Heart right ventricle (tissue), 16 donors: ENCODE measurements at regions of chr1 and their contacts with region 1.

Region 1: GRCh38 chr1:192808518-192809306 is at the start of gene RGS2:
- DNase-seq: peak; percentile 89 to 92
- ATAC-seq: peak; percentile 97 to 100 (median 98)
- H3K4me3 ChIP-seq: peak within 1 kb of the TSS; percentile 56 to 94 (median 74)
- H3K27ac ChIP-seq: peak within 1 kb of the TSS; percentile 60 to 94 (median 88)
- H3K4me1 ChIP-seq: peaks cover 0 to 59% (median 23%) of the 10 kb centered on the region in 9 donors
- H3K27me3 ChIP-seq: no peaks in the 10 kb centered on the region
- CTCF ChIP-seq: peak in 5 of 9 donors; percentile 21 to 51 (median 29)
- total RNA-seq, gene RGS2: 12.2 to 30.8 (median 17.4) TPM

Region 2: GRCh38 chr1:192609110-192610079 is 199.3 kb before region 1 on chr1:
- intact Hi-C with region 1: loop called in 4 of 10 experiments (anchors 5 to 10 kb)
- DNase-seq: peak; percentile 9 to 17
- ATAC-seq: peak in 7 of 8 donors; percentile 26 to 89 (median 52)
- H3K4me3 ChIP-seq: no peak overlapping the region
- H3K27ac ChIP-seq: no peak overlapping the region
- H3K4me1 ChIP-seq: peaks cover 0 to 22% (median 0%) of the 10 kb centered on the region in 9 donors
- H3K27me3 ChIP-seq: no peaks in the 10 kb centered on the region
- CTCF ChIP-seq: no peak

Region 3: DNA sequence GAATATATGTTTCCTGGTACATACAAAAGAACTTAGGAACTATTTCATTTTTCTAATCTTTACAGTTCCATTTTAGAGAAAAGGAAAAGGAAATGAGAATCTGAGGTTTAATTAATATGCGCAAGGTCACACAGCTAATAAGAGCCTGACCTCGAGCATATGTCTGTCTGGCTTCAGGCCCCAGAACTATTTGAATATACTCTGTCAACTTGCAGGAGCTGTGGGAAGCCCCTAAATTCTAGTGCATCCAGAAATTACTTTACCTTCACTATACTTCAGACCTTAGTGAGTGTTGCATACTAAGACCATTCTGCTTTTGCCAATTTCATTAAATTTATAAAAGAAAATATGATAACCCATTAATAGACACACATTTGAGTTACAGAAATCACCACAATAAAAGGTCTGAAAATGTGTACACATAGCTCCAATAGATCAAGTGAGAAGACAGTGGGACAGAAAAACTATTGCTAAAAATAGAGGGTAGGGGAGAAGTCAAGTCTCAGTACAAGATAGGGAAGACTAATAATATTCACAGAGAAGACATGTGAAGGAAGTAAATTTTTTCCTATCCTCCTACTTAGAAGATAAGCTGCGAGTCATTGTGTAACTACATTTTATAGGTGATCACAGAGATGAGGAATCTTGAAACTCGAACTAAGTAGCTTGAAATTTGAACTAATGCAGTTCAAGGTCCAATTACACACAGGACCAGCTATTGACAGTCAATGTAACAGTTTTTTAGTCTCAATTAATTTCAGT is 168.9 kb before region 1 on chr1:
- intact Hi-C with region 1: loop called in 1 of 10 experiments (anchors 10 kb)
- DNase-seq: no peak
- ATAC-seq: peak in 1 of 8 donors; percentile 18
- H3K4me3 ChIP-seq: no peak overlapping the region
- H3K27ac ChIP-seq: no peak overlapping the region
- H3K4me1 ChIP-seq: peaks cover 0 to 8% (median 0%) of the 10 kb centered on the region in 9 donors
- H3K27me3 ChIP-seq: no peaks in the 10 kb centered on the region
- CTCF ChIP-seq: no peak

Region 4: GRCh38 chr1:192998536-192998935 is 189.8 kb after region 1 on chr1:
- intact Hi-C with region 1: no loop called
- DNase-seq: no peak
- ATAC-seq: no peak
- H3K4me3 ChIP-seq: no peak overlapping the region
- H3K27ac ChIP-seq: peak overlapping the region in 1 of 10 donors; percentile 23
- H3K4me1 ChIP-seq: no peaks in the 10 kb centered on the region
- H3K27me3 ChIP-seq: no peaks in the 10 kb centered on the region
- CTCF ChIP-seq: peak in 5 of 9 donors; percentile 16 to 46 (median 23)

Region 5: GRCh38 chr1:193019442-193020026 is 210.8 kb after region 1 on chr1:
- intact Hi-C with region 1: loop called in 8 of 10 experiments (anchors 2 to 10 kb)
- DNase-seq: peak in 1 of 2 donors; percentile 8
- ATAC-seq: peak in 4 of 8 donors; percentile 42 to 63 (median 54)
- H3K4me3 ChIP-seq: no peak overlapping the region
- H3K27ac ChIP-seq: no peak overlapping the region
- H3K4me1 ChIP-seq: peaks cover 0 to 2% (median 0%) of the 10 kb centered on the region in 9 donors
- H3K27me3 ChIP-seq: no peaks in the 10 kb centered on the region
- CTCF ChIP-seq: peak; percentile 26 to 74 (median 60)

Region 6: DNA sequence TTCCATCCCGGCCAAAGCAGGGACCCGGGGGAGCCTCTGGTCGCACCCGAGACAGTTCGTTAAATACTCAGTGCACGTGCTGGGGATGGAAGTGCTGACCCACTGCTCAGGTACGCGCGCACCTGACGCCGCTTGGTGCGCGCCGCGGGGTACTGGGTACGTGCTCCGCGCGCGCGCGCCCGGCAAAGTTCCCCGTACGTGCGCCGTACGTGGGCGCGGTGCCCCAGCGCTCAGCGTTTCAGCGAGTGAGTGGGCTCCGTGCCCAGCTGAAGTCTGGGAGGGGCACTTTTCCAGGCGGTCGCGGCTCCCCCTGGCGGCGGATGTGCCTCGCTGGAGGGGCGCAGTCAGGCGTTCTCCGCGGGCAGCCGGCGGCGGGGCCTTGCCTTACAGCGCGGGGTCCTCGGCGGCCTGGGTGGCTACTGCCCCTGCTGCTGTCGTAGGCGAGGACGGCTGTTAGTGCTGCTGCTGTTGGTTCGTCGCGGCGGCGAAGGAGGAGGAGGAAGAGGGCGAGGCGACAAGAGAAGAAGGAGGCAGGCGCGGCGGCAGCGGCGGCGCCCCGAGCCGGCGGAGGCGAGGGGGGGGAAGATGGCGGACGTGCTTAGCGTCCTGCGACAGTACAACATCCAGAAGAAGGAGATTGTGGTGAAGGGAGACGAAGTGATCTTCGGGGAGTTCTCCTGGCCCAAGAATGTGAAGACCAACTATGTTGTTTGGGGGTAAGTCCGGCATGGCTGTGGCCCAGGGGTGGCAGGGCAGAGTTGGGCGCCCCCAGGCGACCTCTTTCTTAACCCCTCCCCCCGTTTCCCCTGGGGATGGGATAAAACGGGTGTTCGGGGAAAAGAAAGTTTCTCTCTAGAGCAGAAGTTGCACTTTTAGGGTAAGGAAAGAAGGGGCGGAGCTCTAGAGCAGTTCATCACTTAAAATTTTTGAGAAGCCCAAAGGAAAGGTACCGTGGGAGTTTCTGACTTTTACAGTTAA is 313.2 kb after region 1 on chr1 and contains the start of gene CDC73:
- intact Hi-C with region 1: loop called in 5 of 10 experiments (anchors 2 to 5 kb)
- DNase-seq: peak; percentile 97 to 99
- ATAC-seq: peak; percentile 98 to 100 (median 99)
- H3K4me3 ChIP-seq: peak within 1 kb of the TSS; percentile 59 to 91 (median 72)
- H3K27ac ChIP-seq: peak within 1 kb of the TSS; percentile 89 to 98 (median 95)
- H3K4me1 ChIP-seq: peaks cover 10 to 41% (median 34%) of the 10 kb centered on the region in 9 donors
- H3K27me3 ChIP-seq: no peaks in the 10 kb centered on the region
- CTCF ChIP-seq: peak; percentile 72 to 98 (median 94)
- total RNA-seq, gene CDC73: 47.9 to 70.2 (median 57.0) TPM